SK-N-SH (cell line): ENCODE measurements at regions of chr7 and their contacts with region 1.

Region 1: DNA sequence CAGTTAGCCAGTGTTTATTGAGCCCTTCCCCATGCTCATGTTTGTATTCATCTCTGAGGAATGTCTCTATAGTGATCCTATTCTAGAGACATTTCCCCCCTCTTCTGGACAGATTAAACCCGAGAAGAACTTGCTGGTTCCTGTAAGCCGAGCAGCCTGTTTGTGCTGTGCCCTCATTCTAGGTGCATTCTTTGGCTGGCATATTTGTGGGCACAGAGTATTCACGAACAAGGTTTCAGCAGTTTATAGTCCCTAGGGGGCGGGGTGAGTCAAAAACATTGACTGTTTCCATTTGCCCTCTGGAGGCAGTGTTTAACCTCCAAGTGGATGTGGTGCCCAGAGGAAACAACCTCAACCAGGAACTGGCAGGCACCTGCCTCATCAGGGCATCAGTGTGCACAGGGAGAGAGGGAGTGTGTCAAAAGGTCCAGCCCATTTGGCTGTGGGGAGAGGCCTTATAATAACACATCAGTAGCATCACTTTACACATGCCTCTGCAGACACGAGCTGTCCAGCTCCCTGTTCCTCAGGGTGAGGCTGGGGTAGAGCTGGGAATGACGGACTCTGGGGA is 273.3 kb upstream of the LRGUK start:
- DNase-seq: peak; percentile 72
- H3K4me3 ChIP-seq: peak overlapping the region in 1 of 2 experiments; percentile 7; a peak in 2 of 4 replicates
- H3K27ac ChIP-seq: peak overlapping the region; percentile 85 to 98
- H3K4me1 ChIP-seq: peaks cover 30 to 53% of the 10 kb centered on the region in 2 experiments
- H3K27me3 ChIP-seq: no peaks in the 10 kb centered on the region
- CTCF ChIP-seq: peak; percentile 94
- EP300 ChIP-seq: peak; percentile 47 to 88
- RAD21 ChIP-seq: peak; percentile 78

Region 2: GRCh38 chr7:133668296-133669060 is 185.3 kb before region 1 on chr7:
- CTCF ChIA-PET with region 1: no interaction called
- POLR2A ChIA-PET with region 1: no interaction called
- DNase-seq: no peak
- H3K4me3 ChIP-seq: no peak overlapping the region
- H3K27ac ChIP-seq: peak overlapping the region; percentile 39 to 94; a peak in 3 of 4 replicates
- H3K4me1 ChIP-seq: peaks cover 7 to 56% of the 10 kb centered on the region in 2 experiments; a peak in 3 of 4 replicates
- H3K27me3 ChIP-seq: no peaks in the 10 kb centered on the region
- CTCF ChIP-seq: no peak
- EP300 ChIP-seq: no peak
- RAD21 ChIP-seq: no peak

Region 3: GRCh38 chr7:133770863-133771492 is 82.8 kb before region 1 on chr7:
- CTCF ChIA-PET with region 1: interaction called, 17 read pairs
- POLR2A ChIA-PET with region 1: interaction called, 4 read pairs
- DNase-seq: no peak
- H3K4me3 ChIP-seq: no peak overlapping the region
- H3K27ac ChIP-seq: peak overlapping the region; percentile 67 to 100
- H3K4me1 ChIP-seq: peaks cover 12 to 74% of the 10 kb centered on the region in 2 experiments
- H3K27me3 ChIP-seq: no peaks in the 10 kb centered on the region
- CTCF ChIP-seq: no peak
- EP300 ChIP-seq: no peak
- RAD21 ChIP-seq: no peak

Region 4: DNA sequence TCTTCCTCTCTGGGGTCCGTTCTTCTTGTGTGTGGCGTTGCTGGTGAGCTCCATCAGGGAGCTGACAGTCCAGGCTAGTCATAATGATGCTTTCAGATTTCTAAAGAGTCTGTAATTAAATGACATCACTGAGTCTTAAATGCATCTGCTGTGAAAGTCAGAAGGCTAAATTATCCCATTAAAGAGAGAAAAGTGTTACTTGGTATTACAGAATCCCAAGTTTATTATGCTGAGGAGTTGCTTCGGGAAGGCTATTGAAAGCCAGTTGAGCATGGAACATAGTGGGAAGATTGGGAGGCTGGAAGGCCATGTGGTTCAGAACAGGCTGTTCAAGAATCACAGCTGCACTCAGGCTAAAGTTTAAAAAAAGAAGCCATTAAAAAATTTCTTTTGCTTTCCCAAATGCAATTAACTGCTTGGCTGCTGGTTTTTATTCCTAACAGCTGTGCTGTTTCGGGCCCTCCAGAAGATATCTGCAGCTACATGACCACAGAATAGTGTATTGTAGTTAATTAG is 69.2 kb before region 1 on chr7:
- CTCF ChIA-PET with region 1: interaction called, 17 read pairs
- POLR2A ChIA-PET with region 1: no interaction called
- DNase-seq: peak; percentile 66
- H3K4me3 ChIP-seq: no peak overlapping the region
- H3K27ac ChIP-seq: peak overlapping the region in 1 of 2 experiments; percentile 100; a peak in 3 of 4 replicates
- H3K4me1 ChIP-seq: peaks cover 0 to 57% of the 10 kb centered on the region in 2 experiments; a peak in 2 of 4 replicates
- H3K27me3 ChIP-seq: no peaks in the 10 kb centered on the region
- CTCF ChIP-seq: no peak
- EP300 ChIP-seq: peak in 1 of 2 experiments; percentile 99; a peak in 2 of 4 replicates
- RAD21 ChIP-seq: peak; percentile 54

Region 5: DNA sequence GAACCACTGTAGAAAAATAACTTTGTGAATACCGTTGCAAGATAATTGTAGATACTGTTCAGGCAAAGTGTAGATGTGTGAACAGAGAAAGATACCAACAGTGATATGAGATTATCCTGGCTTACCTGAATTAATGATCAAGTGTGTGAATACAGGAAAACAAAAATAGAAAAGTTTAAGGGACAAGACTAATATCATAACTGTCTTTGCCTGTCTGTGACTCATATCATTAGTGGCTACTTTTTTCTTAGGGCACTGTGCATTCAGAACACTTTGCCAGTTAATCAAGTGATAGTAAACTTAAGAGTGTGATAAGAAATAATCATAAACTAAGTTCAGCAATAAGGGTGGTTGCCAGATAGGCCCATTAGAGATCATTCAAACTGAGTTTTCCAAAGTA is 49.7 kb before region 1 on chr7:
- CTCF ChIA-PET with region 1: interaction called, 46 read pairs
- POLR2A ChIA-PET with region 1: no interaction called
- DNase-seq: no peak
- H3K4me3 ChIP-seq: no peak overlapping the region
- H3K27ac ChIP-seq: peak overlapping the region in 1 of 2 experiments; percentile 100; a peak in 2 of 4 replicates
- H3K4me1 ChIP-seq: peaks cover 0 to 45% of the 10 kb centered on the region in 2 experiments; a peak in 2 of 4 replicates
- H3K27me3 ChIP-seq: no peaks in the 10 kb centered on the region
- CTCF ChIP-seq: no peak
- EP300 ChIP-seq: no peak
- RAD21 ChIP-seq: no peak

Region 6: DNA sequence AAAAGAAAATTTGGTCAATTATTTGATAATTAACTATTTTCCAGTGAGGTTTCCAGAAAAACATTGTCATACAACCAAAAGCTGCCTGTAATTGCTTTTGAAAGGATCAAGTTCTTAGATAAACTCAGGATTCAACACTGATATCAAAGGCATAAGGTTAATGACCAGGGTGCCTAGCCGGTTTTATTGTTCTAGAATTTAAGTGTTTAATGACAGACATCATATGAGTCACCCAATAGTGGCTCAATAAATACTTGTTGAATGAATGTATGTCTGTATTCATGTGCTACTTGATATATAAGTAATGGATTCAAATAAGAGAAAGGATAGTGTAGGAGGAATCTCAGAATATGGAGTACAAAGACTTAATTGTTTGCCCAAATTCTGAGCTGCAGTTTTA is 77.3 kb after region 1 on chr7:
- CTCF ChIA-PET with region 1: interaction called, 13 read pairs
- POLR2A ChIA-PET with region 1: no interaction called
- DNase-seq: no peak
- H3K4me3 ChIP-seq: no peak overlapping the region
- H3K27ac ChIP-seq: peak overlapping the region in 1 of 2 experiments; percentile 82; a peak in 1 of 4 replicates
- H3K4me1 ChIP-seq: peaks cover 9 to 42% of the 10 kb centered on the region in 2 experiments; a peak in 2 of 4 replicates
- H3K27me3 ChIP-seq: no peaks in the 10 kb centered on the region
- CTCF ChIP-seq: no peak
- EP300 ChIP-seq: no peak
- RAD21 ChIP-seq: no peak

Region 7: DNA sequence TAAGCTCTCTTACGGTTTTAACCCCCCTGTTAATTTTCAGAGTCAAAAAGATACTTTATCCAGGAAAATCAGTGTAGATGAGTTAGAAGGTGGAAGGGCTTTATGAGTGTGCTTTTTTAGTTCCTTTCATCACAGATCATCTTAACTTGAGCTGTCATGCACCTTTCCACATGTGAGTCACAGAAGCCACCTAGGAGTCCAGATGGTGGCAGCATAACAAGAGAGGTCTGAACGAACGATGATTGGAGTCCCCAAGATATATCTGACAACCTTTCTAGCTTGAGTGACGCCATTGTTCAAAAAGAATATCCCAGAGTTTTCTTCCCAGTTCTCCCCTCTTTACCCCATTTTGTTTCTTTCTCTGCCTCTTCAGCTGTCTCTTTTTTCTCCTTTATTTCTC is 157.2 kb after region 1 on chr7:
- CTCF ChIA-PET with region 1: interaction called, 39 read pairs
- POLR2A ChIA-PET with region 1: interaction called, 5 read pairs
- DNase-seq: no peak
- H3K4me3 ChIP-seq: peak overlapping the region in 1 of 2 experiments; percentile 9; a peak in 1 of 4 replicates
- H3K27ac ChIP-seq: peak overlapping the region in 1 of 2 experiments; percentile 98; a peak in 2 of 4 replicates
- H3K4me1 ChIP-seq: peaks cover 0 to 15% of the 10 kb centered on the region in 2 experiments; a peak in 2 of 4 replicates
- H3K27me3 ChIP-seq: no peaks in the 10 kb centered on the region
- CTCF ChIP-seq: no peak
- EP300 ChIP-seq: no peak
- RAD21 ChIP-seq: no peak